ENCODE measurements at regions of chr6 and their contacts with region 1.

Region 1: GRCh38 chr6:53794720-53795253 is at the start of gene LRRC1:
- DNase-seq: peak; percentile 96
- ATAC-seq: peak; percentile 66
- H3K4me3 Mint-ChIP-seq: peak within 1 kb of the TSS; percentile 95
- H3K27ac Mint-ChIP-seq: peak within 1 kb of the TSS; percentile 98
- H3K4me1 Mint-ChIP-seq: peaks cover 30% of the 10 kb centered on the region
- H3K27me3 Mint-ChIP-seq: peaks cover 20% of the 10 kb centered on the region
- CTCF ChIP-seq: no peak
- total RNA-seq, gene LRRC1: 12.6 to 13.2 TPM (median 12.7 TPM) in 3 replicates

Region 2: GRCh38 chr6:53805725-53806124 is 10.9 kb after region 1 on chr6:
- CTCF ChIA-PET with region 1: interaction called, 10 read pairs
- POLR2A ChIA-PET with region 1: interaction called, 4 read pairs
- DNase-seq: no peak
- ATAC-seq: peak; percentile 87
- H3K4me3 Mint-ChIP-seq: no peak overlapping the region
- H3K27ac Mint-ChIP-seq: no peak overlapping the region
- H3K4me1 Mint-ChIP-seq: peaks cover 49% of the 10 kb centered on the region
- H3K27me3 Mint-ChIP-seq: no peaks in the 10 kb centered on the region
- CTCF ChIP-seq: no peak